ENCODE measurements at regions of chr10 and their contacts with region 1.

Region 1: DNA sequence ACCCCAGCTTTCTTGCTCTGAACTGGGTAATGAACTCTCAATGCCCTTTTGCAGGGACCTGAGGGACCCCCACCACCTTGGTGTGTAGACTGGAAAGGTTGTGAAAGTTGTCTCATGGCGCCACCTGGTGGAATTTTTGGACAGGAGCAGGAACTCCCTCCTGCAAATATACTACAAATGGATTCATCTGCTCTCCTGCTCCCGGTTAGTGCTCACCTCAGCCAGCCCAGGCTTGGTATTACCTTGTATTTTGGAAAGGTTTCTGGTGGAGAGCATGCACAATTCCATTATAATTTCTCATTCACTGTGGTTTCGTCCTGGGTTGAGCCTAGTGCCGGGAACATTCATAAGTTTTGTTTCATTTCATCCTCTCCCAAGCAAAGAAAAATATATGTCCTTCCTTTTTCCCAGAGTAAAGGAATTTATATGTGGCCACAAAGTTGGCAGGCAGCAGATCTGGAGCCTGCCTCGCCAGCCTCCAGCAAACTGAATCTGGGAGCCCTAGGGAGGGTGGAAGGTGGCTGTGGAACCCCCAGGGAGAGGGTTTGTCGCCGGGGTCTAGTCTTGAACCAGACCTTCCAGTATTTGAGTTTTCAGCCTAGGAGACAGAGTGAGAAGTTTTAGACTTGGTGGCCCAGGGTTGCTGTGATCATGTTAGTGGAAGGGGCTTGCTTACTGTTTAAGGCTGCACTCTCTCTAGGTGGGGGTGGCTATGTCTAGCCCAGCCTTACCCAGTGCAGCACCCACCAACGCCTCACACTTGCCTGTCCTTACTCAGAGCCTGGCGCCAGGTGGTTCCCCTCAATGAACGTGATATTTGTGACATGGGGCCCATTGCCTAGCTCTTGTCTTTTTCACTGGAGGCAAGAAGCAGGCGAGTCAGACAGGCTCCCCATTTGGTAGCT is 9.5 kb downstream of the FAM241B start:
- DNase-seq: peak; percentile 60 to 69
- H3K4me3 ChIP-seq: no peak overlapping the region
- H3K27ac ChIP-seq: no peak overlapping the region
- H3K4me1 ChIP-seq: no peaks in the 10 kb centered on the region
- H3K27me3 ChIP-seq: no peaks in the 10 kb centered on the region
- CTCF ChIP-seq: peak; percentile 19 to 84 (median 76)
- POLR2A ChIP-seq: no peak

Region 2: DNA sequence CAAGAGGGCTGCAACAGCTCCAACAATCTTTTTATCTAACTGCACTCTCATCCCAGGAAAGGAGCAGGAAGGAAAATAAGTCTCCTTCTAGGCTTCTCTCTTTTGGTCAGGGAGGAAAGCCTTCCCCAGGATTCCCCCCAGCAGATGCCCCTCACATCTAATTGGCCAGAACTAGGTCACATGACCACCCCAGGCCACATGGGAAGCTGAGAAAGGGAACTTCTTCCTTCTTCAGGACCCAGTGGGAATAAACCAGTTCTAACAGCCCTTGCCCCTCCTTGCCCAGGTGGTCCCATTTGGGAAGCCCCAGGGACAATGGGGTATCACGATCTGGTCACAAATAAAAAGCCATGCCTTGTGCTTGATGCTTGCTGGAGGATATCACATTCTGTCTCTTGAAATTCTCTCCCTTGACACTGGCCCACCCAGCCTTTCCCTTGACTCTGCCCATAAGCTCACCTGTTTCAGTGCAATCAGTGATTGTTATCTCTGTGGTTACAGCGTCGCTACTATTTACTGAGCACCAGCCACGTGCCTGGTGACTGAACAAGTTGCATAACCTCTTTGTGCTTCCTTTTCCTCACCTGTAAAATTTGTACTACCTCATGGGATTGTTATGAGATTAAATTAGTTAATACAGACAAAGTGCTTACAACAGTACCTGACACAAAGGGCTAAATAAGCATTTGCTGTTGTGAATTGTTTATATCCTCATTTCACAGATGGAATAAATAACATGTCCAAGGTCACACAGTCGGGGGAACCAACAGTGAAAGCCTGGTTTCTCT is 213.8 kb before region 1 on chr10:
- intact Hi-C with region 1: loop called (anchors 5 kb)
- DNase-seq: no peak
- H3K4me3 ChIP-seq: no peak overlapping the region
- H3K27ac ChIP-seq: no peak overlapping the region
- H3K4me1 ChIP-seq: no peaks in the 10 kb centered on the region
- H3K27me3 ChIP-seq: no peaks in the 10 kb centered on the region
- CTCF ChIP-seq: no peak
- POLR2A ChIP-seq: no peak

Region 3: GRCh38 chr10:69515699-69516259 is 123.8 kb before region 1 on chr10:
- intact Hi-C with region 1: loop called (anchors 5 kb)
- DNase-seq: peak; percentile 65 to 71
- H3K4me3 ChIP-seq: no peak overlapping the region
- H3K27ac ChIP-seq: no peak overlapping the region
- H3K4me1 ChIP-seq: no peaks in the 10 kb centered on the region
- H3K27me3 ChIP-seq: no peaks in the 10 kb centered on the region
- CTCF ChIP-seq: peak; percentile 35 to 82 (median 71)
- POLR2A ChIP-seq: no peak

Region 4: DNA sequence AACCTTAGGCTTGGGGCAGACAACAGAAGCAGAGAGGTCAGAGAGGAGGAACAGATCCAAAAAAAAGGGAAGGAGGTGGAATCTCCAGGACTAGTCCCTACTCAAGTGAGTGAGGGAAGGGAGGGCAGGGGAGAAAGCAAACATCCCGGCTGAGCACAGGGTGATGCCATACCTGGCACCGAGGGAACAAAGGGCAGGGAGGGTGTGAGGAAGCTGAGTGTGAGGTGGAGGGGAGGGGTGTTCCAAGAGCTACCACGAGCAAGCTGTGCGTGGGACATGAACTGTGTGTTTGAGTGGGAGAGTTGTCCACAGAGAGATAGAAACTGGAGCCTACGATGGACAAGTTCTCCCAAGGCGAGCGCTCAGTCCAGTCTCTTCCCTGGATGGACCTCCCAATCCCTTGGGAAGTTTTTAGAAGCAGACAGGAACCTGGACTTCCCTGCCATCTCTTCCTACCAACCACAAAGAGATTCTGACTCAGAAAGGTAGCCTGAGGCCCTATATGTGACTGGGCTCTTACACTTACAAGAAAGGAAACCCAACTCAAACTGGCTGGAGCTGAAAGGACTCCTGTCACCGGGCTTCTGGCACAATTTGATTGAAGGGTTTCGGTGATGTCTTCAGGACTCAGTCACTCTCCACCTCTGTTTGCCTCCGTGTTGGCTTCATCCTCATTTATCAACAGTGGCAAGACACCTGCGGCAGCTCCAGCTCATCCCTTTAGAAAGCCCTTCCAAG is 158.3 kb after region 1 on chr10:
- intact Hi-C with region 1: loop called (anchors 10 kb)
- DNase-seq: no peak
- H3K4me3 ChIP-seq: no peak overlapping the region
- H3K27ac ChIP-seq: no peak overlapping the region
- H3K4me1 ChIP-seq: peaks cover 15 to 16% of the 10 kb centered on the region in 2 donors
- H3K27me3 ChIP-seq: no peaks in the 10 kb centered on the region
- CTCF ChIP-seq: no peak
- POLR2A ChIP-seq: no peak

Region 5: GRCh38 chr10:69810675-69811397 is 171.3 kb after region 1 on chr10:
- intact Hi-C with region 1: no loop called
- DNase-seq: no peak
- H3K4me3 ChIP-seq: no peak overlapping the region
- H3K27ac ChIP-seq: no peak overlapping the region
- H3K4me1 ChIP-seq: peaks cover 0 to 7% of the 10 kb centered on the region in 2 donors
- H3K27me3 ChIP-seq: no peaks in the 10 kb centered on the region
- CTCF ChIP-seq: no peak
- POLR2A ChIP-seq: no peak

Region 6: DNA sequence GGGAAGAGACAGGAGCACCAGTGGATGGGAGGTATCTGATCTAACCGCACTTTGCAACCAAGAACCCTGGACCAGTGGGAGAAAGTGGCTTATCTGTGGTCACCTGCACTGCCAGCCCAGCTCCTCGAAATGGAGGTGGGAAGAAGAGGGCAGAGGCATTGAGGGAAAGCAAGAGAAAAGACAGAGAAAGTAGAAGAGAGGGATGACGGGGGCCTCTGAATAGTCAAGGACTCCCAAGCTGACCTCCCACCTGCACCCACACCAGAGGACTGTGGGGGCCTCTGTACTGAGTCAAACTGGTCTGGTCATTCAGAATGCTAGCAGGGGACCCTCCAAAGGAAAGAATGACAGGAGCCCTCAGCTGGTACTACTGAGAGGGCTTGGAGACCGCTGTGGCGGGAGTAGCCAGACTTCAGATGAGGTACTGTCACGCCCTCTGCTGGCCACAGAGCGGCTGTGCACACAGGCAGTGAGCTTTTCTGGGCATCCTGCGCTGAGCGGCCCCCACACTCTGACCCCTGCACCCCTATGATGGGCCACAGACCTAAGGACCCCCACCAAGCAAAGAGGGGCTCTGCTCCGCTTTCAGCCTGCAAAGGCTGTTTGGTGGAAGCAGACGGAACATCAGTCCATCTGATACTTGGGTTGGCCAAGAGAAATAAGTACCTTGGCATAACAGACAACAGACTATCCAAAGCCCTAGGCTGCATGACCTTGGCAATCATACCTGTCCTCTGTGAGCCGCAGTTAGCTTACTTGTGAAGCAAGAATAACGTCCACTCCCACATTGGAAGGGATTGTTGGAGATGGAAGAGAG is 275.1 kb after region 1 on chr10:
- intact Hi-C with region 1: loop called (anchors 10 kb)
- DNase-seq: peak; percentile 81 to 86
- H3K4me3 ChIP-seq: no peak overlapping the region
- H3K27ac ChIP-seq: no peak overlapping the region
- H3K4me1 ChIP-seq: peaks cover 20 to 34% of the 10 kb centered on the region in 2 donors
- H3K27me3 ChIP-seq: no peaks in the 10 kb centered on the region
- CTCF ChIP-seq: peak; percentile 84 to 97 (median 93)
- POLR2A ChIP-seq: no peak